ENCODE measurements at regions of chr17 and their contacts with region 1.

Region 1: GRCh38 chr17:52660692-52661091 is 502.2 kb upstream of the CA10 start:
- DNase-seq: no peak
- ATAC-seq: no peak
- H3K4me3 ChIP-seq: no peak overlapping the region
- H3K27ac ChIP-seq: no peak overlapping the region
- H3K4me1 ChIP-seq: no peaks in the 10 kb centered on the region
- H3K27me3 ChIP-seq: no peaks in the 10 kb centered on the region
- CTCF ChIP-seq: no peak
- POLR2A ChIP-seq: no peak

Region 2: GRCh38 chr17:52606098-52606497 is 54.6 kb before region 1 on chr17:
- intact Hi-C with region 1: loop called in 1 of 10 experiments (anchors 10 kb)
- DNase-seq: no peak
- ATAC-seq: peak in 1 of 4 donors; percentile 22
- H3K4me3 ChIP-seq: no peak overlapping the region
- H3K27ac ChIP-seq: no peak overlapping the region
- H3K4me1 ChIP-seq: no peaks in the 10 kb centered on the region
- H3K27me3 ChIP-seq: no peaks in the 10 kb centered on the region
- CTCF ChIP-seq: no peak
- POLR2A ChIP-seq: no peak

Region 3: GRCh38 chr17:53017227-53017626 is 356.5 kb after region 1 on chr17:
- intact Hi-C with region 1: no loop called
- DNase-seq: no peak
- ATAC-seq: no peak
- H3K4me3 ChIP-seq: no peak overlapping the region
- H3K27ac ChIP-seq: no peak overlapping the region
- H3K4me1 ChIP-seq: no peaks in the 10 kb centered on the region
- H3K27me3 ChIP-seq: no peaks in the 10 kb centered on the region
- CTCF ChIP-seq: no peak
- POLR2A ChIP-seq: no peak

Region 4: GRCh38 chr17:53516636-53517035 is 855.9 kb after region 1 on chr17:
- intact Hi-C with region 1: no loop called
- DNase-seq: no peak
- ATAC-seq: no peak
- H3K4me3 ChIP-seq: no peak overlapping the region
- H3K27ac ChIP-seq: no peak overlapping the region
- H3K4me1 ChIP-seq: no peaks in the 10 kb centered on the region
- H3K27me3 ChIP-seq: no peaks in the 10 kb centered on the region
- CTCF ChIP-seq: peak in 1 of 12 donors; percentile 17
- POLR2A ChIP-seq: no peak

Measured in heart left ventricle (tissue), 16 donors.